Pancreas (tissue), 10 donors: ENCODE measurements at regions of chr13 and their contacts with region 1.

Region 1: GRCh38 chr13:39263033-39263432 is 224.8 kb downstream of the NHLRC3 start:
- DNase-seq: peak in 1 of 6 donors; percentile 42
- ATAC-seq: peak; percentile 43 to 90 (median 88)
- H3K4me3 ChIP-seq: no peak overlapping the region
- H3K27ac ChIP-seq: no peak overlapping the region
- H3K4me1 ChIP-seq: no peaks in the 10 kb centered on the region
- H3K27me3 ChIP-seq: no peaks in the 10 kb centered on the region
- CTCF ChIP-seq: peak; percentile 40 to 56 (median 48)

Region 2: GRCh38 chr13:39602614-39603366 is 339.8 kb after region 1 on chr13 and contains the start of gene LHFPL6:
- intact Hi-C with region 1: loop called in 1 of 3 experiments (anchors 10 kb)
- DNase-seq: peak; percentile 57 to 89 (median 72)
- ATAC-seq: peak; percentile 94 to 98 (median 97)
- H3K4me3 ChIP-seq: peak within 1 kb of the TSS; percentile 57 to 69 (median 62)
- H3K27ac ChIP-seq: peak within 1 kb of the TSS in 3 of 4 donors; percentile 8 to 57 (median 11)
- H3K4me1 ChIP-seq: peaks cover 0 to 5% (median 0%) of the 10 kb centered on the region in 3 donors
- H3K27me3 ChIP-seq: peaks cover 0 to 15% (median 0%) of the 10 kb centered on the region in 4 donors
- CTCF ChIP-seq: no peak
- total RNA-seq, gene LHFPL6: 1.8 to 13.4 (median 5.9) TPM